ENCODE measurements at regions of chr16 and their contacts with region 1.

Region 1: GRCh38 chr16:391885-392335 is 5.1 kb upstream of the NME4 start:
- DNase-seq: peak in 2 of 5 donors; percentile 32 to 39
- ATAC-seq: peak in 3 of 4 donors; percentile 49 to 66 (median 66)
- H3K4me3 ChIP-seq: no peak overlapping the region
- H3K27ac ChIP-seq: no peak overlapping the region
- H3K4me1 ChIP-seq: peaks cover 0 to 22% (median 9%) of the 10 kb centered on the region in 12 donors
- H3K27me3 ChIP-seq: no peaks in the 10 kb centered on the region
- CTCF ChIP-seq: peak; percentile 47 to 67 (median 62)
- POLR2A ChIP-seq: no peak

Region 2: DNA sequence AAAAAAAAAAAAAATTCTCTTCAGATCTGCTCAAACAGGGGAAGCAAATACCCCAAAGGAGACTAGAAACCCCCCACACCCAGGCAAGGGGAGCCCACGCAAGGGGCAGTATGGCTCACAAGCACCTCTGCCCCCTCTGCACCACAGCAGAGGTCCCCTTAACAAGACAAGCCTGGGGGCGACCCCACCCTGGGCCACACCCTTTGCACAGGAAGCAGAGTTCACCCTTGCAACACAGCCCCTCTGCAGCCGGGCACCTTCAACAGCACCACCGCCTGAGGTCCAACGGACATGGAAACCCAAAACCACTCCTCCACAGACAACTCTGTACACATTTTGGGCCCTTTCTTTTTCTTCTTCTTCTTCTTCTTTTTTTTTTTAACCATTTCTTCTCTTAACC is 52.2 kb before region 1 on chr16:
- intact Hi-C with region 1: no loop called
- DNase-seq: peak in 1 of 5 donors; percentile 38
- ATAC-seq: no peak
- H3K4me3 ChIP-seq: no peak overlapping the region
- H3K27ac ChIP-seq: peak overlapping the region in 1 of 12 donors; percentile 3
- H3K4me1 ChIP-seq: peaks cover 0 to 44% (median 2%) of the 10 kb centered on the region in 12 donors
- H3K27me3 ChIP-seq: no peaks in the 10 kb centered on the region
- CTCF ChIP-seq: no peak
- POLR2A ChIP-seq: no peak

Region 3: GRCh38 chr16:483341-484075 is 91.6 kb after region 1 on chr16:
- intact Hi-C with region 1: loop called in 1 of 10 experiments (anchors 10 kb)
- DNase-seq: peak in 1 of 5 donors; percentile 32
- ATAC-seq: peak; percentile 76 to 91 (median 82)
- H3K4me3 ChIP-seq: no peak overlapping the region
- H3K27ac ChIP-seq: peak overlapping the region in 9 of 12 donors; percentile 16 to 76 (median 70)
- H3K4me1 ChIP-seq: peaks cover 0 to 18% (median 2%) of the 10 kb centered on the region in 12 donors
- H3K27me3 ChIP-seq: no peaks in the 10 kb centered on the region
- CTCF ChIP-seq: no peak
- POLR2A ChIP-seq: no peak

Region 4: GRCh38 chr16:589658-590159 is 197.8 kb after region 1 on chr16 and contains the start of gene RAB40C:
- intact Hi-C with region 1: no loop called
- DNase-seq: peak; percentile 99 to 100 (median 100)
- ATAC-seq: peak; percentile 92 to 97 (median 96)
- H3K4me3 ChIP-seq: peak within 1 kb of the TSS; percentile 77 to 97 (median 90)
- H3K27ac ChIP-seq: peak within 1 kb of the TSS; percentile 89 to 100 (median 98)
- H3K4me1 ChIP-seq: peaks cover 5 to 64% (median 34%) of the 10 kb centered on the region in 12 donors
- H3K27me3 ChIP-seq: no peaks in the 10 kb centered on the region
- CTCF ChIP-seq: peak in 5 of 12 donors; percentile 23 to 44 (median 28)
- POLR2A ChIP-seq: no peak
- total RNA-seq, gene RAB40C: 10.2 to 17.8 (median 12.6) TPM

Region 5: GRCh38 chr16:667780-668518 is 276.0 kb after region 1 on chr16 and contains the start of gene RHOT2:
- intact Hi-C with region 1: loop called in 2 of 10 experiments (anchors 10 kb)
- DNase-seq: peak; percentile 95 to 97 (median 95)
- ATAC-seq: peak; percentile 74 to 93 (median 90)
- H3K4me3 ChIP-seq: peak within 1 kb of the TSS; percentile 67 to 100 (median 98)
- H3K27ac ChIP-seq: peak within 1 kb of the TSS; percentile 49 to 99 (median 94)
- H3K4me1 ChIP-seq: peaks cover 6 to 22% (median 17%) of the 10 kb centered on the region in 12 donors
- H3K27me3 ChIP-seq: no peaks in the 10 kb centered on the region
- CTCF ChIP-seq: peak; percentile 71 to 98 (median 92)
- POLR2A ChIP-seq: peak; percentile 45 to 84
- total RNA-seq, gene RHOT2: 33.7 to 102 (median 83.5) TPM

Region 6: DNA sequence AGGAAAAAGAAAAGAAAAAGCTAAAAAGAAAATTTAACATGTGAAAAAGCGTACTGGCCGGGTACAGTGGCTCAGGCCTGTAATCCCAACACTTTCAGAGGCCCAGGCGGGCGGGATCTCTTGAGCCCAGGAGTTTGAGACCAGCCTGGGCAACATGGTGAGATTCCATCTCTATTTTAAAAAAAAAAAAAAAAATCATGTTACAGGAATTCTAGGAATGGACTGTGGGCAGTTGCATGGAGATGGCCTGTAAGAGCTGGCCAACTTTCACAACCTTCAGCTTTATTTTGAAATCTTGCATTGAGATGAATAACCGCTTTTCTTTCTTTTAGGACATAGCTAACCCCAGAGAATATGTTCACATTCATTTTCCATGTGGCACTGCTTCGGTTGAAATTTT is 357.1 kb after region 1 on chr16:
- intact Hi-C with region 1: no loop called
- DNase-seq: no peak
- ATAC-seq: no peak
- H3K4me3 ChIP-seq: no peak overlapping the region
- H3K27ac ChIP-seq: no peak overlapping the region
- H3K4me1 ChIP-seq: peaks cover 0 to 3% (median 0%) of the 10 kb centered on the region in 12 donors
- H3K27me3 ChIP-seq: peaks cover 0 to 28% (median 0%) of the 10 kb centered on the region in 9 donors
- CTCF ChIP-seq: no peak
- POLR2A ChIP-seq: no peak